Transverse colon (tissue), 4 donors: ENCODE measurements at regions of chr7 and their contacts with region 1.

Region 1: DNA sequence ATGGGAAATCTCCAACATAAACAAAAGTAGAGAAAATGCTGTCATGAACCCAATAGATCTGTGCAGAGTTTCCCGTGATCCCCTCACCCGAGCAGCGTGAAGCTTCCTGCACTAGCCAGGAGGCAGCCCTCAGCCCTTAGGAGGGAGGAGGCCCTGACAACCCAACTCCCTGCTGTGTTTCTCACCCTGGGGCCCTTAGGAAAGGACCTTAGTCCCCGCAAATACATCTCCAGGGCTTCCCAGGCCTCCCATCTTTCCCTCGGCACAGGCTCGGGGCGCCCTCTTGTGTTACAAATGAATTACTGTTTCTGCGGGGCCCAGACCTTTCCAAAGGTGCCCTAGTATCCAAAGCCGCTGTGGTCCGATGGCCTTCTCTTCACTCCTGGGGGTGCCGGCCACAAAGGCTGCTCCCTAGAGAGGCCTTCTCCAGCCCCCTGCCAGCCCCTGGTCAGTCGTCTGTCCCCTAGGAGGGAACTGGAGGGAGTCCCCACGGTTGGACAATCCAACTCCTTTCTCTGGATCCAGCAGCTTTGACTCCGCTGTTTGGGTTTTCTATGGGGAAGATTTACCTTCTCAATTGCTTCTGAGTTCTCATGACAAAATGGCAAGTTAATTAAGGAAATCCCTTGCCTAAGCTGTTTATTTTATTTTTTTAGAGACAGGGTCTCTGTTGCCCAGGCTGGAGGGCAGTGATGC is 49.9 kb upstream of the SH2B2 start:
- DNase-seq: peak; percentile 67
- H3K4me3 ChIP-seq: no peak overlapping the region
- H3K27ac ChIP-seq: no peak overlapping the region
- H3K4me1 ChIP-seq: no peaks in the 10 kb centered on the region
- H3K27me3 ChIP-seq: no peaks in the 10 kb centered on the region
- CTCF ChIP-seq: peak; percentile 75 to 81 (median 77)
- EP300 ChIP-seq: no peak
- POLR2A ChIP-seq: no peak

Region 2: DNA sequence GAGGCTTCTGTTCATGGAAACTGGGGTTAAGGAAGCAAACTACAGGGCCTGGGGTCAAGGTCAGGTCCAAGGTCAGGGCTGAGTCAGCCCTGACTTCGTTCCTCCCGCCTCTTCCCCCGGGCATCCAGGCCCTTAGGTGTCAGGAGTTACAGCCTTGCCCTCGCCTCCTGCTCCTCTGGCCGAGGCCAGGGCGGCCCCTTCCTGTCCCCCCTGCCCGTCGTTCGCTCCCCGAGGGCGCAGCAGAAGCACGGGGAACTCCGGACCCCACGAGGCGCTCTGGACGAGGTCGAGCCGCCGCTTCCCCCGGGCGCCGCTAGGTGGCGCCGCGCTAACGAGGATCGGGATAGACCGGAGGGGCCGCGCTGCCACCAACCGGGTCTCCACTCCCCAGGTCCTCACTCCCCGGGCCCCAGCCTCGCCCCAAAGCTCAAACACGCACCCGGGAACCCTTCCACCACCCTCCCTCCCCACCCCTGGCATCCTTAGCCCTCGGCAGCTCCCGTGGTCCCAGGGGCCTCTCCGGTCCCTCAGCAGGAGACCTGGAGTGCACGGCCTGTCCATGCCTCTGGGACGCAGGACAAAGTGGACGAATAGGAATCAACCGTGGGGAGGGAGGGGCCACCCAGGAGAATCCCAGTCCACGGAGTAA is 548.4 kb before region 1 on chr7:
- in situ Hi-C with region 1: loop called in 3 of 4 experiments (anchors 10 to 25 kb)
- intact Hi-C with region 1: no loop called
- DNase-seq: peak; percentile 84
- H3K4me3 ChIP-seq: peak overlapping the region in 2 of 4 donors; percentile 19 to 43
- H3K27ac ChIP-seq: no peak overlapping the region
- H3K4me1 ChIP-seq: peaks cover 2 to 27% (median 12%) of the 10 kb centered on the region in 4 donors
- H3K27me3 ChIP-seq: no peaks in the 10 kb centered on the region
- CTCF ChIP-seq: peak; percentile 93 to 98 (median 98)
- EP300 ChIP-seq: no peak
- POLR2A ChIP-seq: no peak